Dendritic cell treated with granulocyte-macrophage colony-stimulating factor and Interleukin-4, amounts not matched to agents 40 ng/mL and 50 ng/mL, for 4 days (primary cell): ENCODE measurements at regions of chr3 and their contacts with region 1.

Region 1: DNA sequence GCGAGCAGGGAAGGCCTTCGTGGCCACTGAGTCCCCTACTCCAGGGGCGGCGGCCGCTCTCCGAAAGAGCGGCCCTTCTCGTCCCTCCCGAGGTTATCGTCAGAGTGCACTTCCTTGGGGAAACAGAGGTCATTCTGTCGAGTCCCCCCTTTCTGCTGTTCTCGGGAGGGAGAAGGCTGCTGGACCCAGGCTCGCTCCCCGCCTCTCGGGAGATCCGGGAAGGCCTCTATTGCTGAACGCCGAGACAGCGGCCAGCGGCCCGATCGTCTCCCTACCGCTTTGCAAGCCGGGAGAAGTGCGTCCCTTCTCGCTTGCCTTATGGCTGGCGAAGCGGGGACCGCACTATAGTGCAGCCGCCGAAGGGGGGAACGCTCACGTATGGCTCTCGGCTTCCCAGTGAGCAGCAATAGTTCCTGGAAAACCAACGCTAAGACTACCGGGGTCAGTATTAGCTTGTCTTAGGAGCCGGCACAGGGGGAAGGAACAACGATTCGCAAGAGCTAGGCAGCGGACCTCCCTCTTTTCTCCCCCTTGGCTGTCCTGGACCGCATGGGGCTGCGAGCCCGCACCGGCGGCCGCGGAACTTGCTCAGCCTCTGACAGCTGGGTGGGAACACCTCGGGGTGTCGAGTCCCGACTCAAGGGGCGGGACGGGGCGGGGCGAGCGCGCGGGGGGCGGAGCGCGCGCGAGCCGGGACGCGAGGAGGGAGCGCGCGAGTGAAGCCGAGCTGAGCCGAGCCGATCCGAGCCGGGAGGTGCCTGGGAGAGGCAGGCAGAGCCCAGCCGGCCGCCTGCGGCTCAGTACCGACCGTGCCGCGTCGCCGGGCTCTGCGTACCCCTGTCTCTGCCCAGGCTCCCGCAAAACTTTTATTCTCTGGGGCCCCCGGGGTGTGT is 930 bp upstream of the PPM1L start:
- H3K4me3 Mint-ChIP-seq: peak overlapping the region; percentile 93
- H3K27ac Mint-ChIP-seq: peak overlapping the region; percentile 97
- H3K4me1 Mint-ChIP-seq: peaks cover 32% of the 10 kb centered on the region
- H3K27me3 Mint-ChIP-seq: peaks cover 2% of the 10 kb centered on the region

Region 2: GRCh38 chr3:160707187-160707794 is 47.8 kb before region 1 on chr3:
- intact Hi-C with region 1: loop called (anchors 5 kb)
- H3K4me3 Mint-ChIP-seq: no peak overlapping the region
- H3K27ac Mint-ChIP-seq: no peak overlapping the region
- H3K4me1 Mint-ChIP-seq: no peaks in the 10 kb centered on the region
- H3K27me3 Mint-ChIP-seq: peaks cover 14% of the 10 kb centered on the region

Region 3: DNA sequence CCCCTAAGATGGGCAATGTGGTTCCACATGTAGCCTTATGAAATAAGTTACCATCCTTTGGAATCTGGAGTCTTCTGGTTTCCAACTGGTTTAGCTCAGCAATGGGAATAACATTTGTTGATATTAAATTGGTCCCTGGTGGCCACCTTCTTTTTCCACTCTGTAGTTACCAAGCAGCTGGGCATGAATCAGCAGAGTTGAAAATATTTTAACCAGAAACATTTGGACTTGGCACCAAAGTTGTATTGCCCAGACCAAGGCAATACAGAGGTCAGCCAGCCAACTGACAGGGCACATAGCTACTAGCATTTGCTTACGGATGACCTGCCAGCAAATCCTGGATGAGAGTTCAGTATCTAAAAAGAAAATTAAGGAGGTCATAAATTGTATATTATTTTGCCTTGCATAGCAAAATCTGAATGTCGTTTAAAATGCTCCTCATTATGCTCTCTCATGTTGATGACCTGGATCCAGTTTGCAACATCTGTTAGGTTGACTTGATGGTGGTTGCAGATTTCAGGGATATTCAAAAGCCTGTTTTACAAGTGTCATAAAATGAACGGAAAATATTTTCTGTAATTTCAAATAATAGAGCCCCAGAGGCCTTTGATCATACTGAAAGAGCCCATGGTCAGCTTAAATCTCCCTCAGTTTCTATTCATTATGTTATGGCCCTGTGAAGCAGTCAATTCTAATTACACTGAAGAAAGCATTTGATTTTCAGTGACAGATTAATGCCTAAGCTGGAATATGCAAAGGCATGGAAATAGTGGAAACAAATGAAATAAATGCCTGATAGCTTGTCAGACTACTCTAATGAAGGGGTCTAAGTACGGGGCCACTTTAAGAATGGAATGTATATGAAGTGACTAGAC is 55.5 kb after region 1 on chr3:
- intact Hi-C with region 1: no loop called
- H3K4me3 Mint-ChIP-seq: no peak overlapping the region
- H3K27ac Mint-ChIP-seq: no peak overlapping the region
- H3K4me1 Mint-ChIP-seq: peaks cover 47% of the 10 kb centered on the region
- H3K27me3 Mint-ChIP-seq: peaks cover 2% of the 10 kb centered on the region

Region 4: GRCh38 chr3:160837394-160837980 is 82.4 kb after region 1 on chr3:
- intact Hi-C with region 1: loop called (anchors 10 kb)
- H3K4me3 Mint-ChIP-seq: peak overlapping the region; percentile 4
- H3K27ac Mint-ChIP-seq: peak overlapping the region; percentile 81
- H3K4me1 Mint-ChIP-seq: peaks cover 55% of the 10 kb centered on the region
- H3K27me3 Mint-ChIP-seq: no peaks in the 10 kb centered on the region

Region 5: DNA sequence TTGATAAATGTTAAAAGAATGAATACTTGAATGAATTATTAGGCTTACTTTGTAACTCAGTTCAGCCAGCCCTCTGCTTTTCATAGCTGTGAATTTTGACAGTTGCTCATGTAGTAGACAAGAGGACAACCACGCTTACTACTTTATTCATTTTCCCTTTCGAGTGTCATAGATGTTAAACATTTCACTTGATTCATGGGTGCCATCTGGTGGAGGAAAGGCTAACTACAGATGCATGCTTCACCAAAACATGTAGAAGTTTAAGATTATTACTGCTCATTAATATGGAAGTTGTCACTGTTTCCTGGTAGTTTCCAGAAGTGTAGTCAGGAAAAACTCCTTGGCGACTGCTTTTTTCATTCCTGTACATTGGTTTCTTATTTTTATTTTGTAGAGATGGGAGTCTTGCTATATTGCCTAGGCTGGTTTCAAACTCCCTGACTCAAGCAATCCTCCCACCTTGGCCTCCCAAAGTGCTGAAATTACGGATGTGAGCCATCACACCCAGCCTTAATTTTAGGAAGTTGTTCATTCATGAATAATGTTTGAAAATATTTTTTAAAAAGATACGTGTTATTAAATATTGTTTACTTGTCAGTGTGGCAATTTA is 186.9 kb after region 1 on chr3:
- intact Hi-C with region 1: loop called (anchors 2 kb)
- H3K4me3 Mint-ChIP-seq: no peak overlapping the region
- H3K27ac Mint-ChIP-seq: no peak overlapping the region
- H3K4me1 Mint-ChIP-seq: no peaks in the 10 kb centered on the region
- H3K27me3 Mint-ChIP-seq: no peaks in the 10 kb centered on the region

Region 6: DNA sequence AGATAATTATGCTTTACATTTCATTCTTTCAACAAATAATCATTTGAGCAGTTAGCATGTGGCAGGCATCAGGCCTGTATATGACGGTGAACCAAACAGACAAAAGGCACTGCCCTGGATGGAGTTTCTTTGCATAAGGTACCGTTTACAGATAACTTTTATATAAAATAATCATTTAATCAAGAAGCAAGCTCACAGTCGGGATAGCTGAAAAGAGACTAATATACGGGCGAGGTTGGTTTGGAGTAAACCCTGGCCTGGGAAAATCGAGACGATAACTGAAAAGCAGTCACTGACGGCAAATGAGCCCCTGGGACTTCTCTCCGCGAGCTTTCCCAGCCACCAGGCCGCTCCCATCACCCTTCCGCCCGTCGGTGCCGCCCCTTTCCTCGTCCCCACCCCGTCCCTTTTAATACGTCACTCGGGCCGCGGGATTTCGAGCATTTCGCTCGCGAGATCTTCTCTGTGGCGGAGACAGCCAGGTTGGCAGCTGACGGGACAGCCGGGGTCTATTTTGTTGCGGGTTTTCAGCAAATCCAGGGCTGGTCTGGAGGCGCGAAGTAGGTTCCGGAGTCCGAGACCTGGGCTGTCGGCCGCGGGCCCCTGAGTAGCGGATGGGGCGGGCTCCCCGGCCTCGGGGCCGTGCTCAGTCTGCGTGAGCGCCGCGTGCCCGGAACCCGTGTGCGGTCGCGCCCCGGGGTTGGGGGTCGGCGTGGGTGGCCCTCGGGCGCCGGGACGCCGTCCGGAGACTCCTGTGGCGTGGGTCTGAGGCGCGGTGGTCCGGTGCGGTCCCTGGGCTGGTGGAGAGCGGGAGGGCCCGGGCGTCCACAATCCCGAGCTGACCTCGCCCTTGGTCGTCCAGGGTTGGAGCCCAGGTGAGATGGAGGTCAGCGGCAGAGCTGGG is 466.0 kb after region 1 on chr3 and contains the start of gene NMD3:
- intact Hi-C with region 1: loop called (anchors 5 kb)
- H3K4me3 Mint-ChIP-seq: peak within 1 kb of the TSS; percentile 86
- H3K27ac Mint-ChIP-seq: peak within 1 kb of the TSS; percentile 92
- H3K4me1 Mint-ChIP-seq: peaks cover 12% of the 10 kb centered on the region
- H3K27me3 Mint-ChIP-seq: peaks cover 2% of the 10 kb centered on the region